ENCODE measurements at regions of chr4 and their contacts with region 1.

Region 1: GRCh38 chr4:7067452-7068278 is at the start of gene GRPEL1:
- DNase-seq: peak; percentile 98 to 100 (median 99)
- H3K4me3 ChIP-seq: peak within 1 kb of the TSS; percentile 64 to 100 (median 96)
- H3K27ac ChIP-seq: peak within 1 kb of the TSS; percentile 3 to 95 (median 87)
- H3K27me3 ChIP-seq: no peaks in the 10 kb centered on the region
- CTCF ChIP-seq: peak in 15 of 56 donors; percentile 4 to 42 (median 25)
- total RNA-seq, gene GRPEL1: 19.1 to 48.6 (median 35.8) TPM

Region 2: GRCh38 chr4:6716018-6716911 is 351.4 kb before region 1 on chr4 and contains the start of gene BLOC1S4:
- intact Hi-C with region 1: loop called in 1 of 2 experiments (anchors 1 kb)
- DNase-seq: peak; percentile 71 to 88 (median 84)
- H3K4me3 ChIP-seq: peak within 1 kb of the TSS; percentile 63 to 96 (median 83)
- H3K27ac ChIP-seq: peak within 1 kb of the TSS; percentile 34 to 99 (median 90)
- H3K27me3 ChIP-seq: no peaks in the 10 kb centered on the region
- CTCF ChIP-seq: peak in 43 of 56 donors; percentile 5 to 59 (median 30)
- total RNA-seq, gene BLOC1S4: 5.0 to 12.2 (median 9.0) TPM

Region 3: GRCh38 chr4:6727081-6727942 is 340.4 kb before region 1 on chr4:
- intact Hi-C with region 1: loop called in 1 of 2 experiments (anchors 2 kb)
- DNase-seq: peak; percentile 53 to 93 (median 90)
- H3K4me3 ChIP-seq: peak overlapping the region in 51 of 59 donors; percentile 2 to 55 (median 30)
- H3K27ac ChIP-seq: peak overlapping the region; percentile 49 to 97 (median 92)
- H3K27me3 ChIP-seq: no peaks in the 10 kb centered on the region
- CTCF ChIP-seq: peak in 20 of 56 donors; percentile 6 to 41 (median 16)

Region 4: DNA sequence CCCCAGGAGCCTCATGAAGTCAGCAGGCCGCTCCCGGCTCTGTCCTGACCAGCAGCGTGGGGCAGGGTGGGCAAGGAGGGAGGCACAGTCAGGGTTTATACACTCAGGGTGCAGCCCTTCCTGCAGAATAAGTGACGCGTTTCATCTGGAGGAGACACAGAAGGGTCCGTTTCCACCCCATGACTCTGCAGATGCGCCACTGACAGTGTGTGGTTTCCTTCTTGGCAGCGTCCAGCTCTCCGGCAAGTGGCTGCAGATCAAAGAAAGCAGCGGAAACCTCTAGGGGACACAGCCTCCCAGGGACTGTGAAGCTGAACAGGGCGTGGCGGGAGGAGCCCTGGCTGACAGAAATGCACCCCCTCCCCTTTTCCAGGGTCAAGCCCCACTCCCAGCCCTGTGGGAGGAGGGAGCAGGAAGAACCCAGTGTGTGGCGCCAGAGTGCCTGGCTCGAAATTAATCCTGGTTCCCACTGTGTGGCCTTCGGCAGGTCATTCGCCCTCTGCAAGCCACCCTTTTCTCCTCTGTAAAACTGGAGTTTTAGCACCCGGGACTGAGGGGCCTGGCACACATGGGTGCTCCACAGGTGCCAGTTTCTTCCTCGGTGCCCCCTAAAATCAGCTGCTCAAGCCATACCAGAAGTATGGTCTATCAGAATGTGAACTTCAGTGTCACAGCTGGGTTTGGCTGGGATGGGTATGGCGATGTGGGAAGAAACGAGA is 175.3 kb before region 1 on chr4:
- intact Hi-C with region 1: loop called in 1 of 2 experiments (anchors 5 kb)
- DNase-seq: peak in 1 of 10 donors; percentile 26
- H3K4me3 ChIP-seq: peak overlapping the region in 19 of 59 donors; percentile 0 to 41 (median 11)
- H3K27ac ChIP-seq: peak overlapping the region in 19 of 59 donors; percentile 3 to 67 (median 36)
- H3K27me3 ChIP-seq: no peaks in the 10 kb centered on the region
- CTCF ChIP-seq: peak in 21 of 56 donors; percentile 12 to 41 (median 22)

Region 5: DNA sequence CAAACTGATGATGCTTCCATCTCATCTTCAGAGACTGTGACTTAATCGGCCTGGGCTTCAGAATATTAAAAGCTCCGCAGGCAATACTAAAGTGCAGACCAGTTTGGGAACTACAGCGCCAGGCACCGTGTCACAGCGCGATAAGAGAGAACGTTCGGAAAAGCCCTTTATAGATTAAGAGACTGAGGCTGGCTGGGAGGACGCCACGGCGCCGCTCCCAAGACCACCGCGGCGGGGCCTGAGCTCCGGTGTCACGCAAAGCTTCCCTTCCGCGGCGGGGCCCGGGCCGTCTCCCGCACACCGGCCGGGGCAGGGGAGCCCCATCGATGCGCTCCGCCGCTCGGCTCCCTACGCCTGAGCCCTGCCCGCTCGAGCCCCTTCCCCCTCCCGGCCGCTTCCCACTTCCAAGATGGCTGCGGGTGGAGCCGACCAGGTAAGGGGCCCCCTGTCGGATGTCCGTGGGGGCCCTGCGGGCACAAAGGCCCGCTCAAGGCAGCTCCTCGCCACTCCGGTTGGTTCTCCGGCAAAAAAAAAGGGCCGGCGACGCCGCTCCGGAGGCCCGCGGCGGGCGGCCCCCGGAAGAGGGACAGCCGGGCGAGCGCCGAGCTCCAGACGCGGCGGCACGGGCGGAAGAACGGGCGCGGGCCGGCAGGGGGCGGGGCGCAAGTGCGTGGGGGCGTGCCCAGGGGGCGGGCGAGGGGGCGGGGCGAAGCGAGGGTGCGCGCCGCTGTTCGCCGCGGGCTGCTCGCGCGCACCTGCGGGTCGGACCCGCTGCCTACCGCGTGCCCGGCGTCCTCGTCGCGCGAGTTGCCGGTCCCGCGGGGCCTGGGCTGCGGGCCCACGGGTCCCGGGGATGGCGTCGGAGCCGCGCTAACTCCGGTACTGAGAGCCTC is 158.3 kb before region 1 on chr4 and contains the start of gene TBC1D14:
- intact Hi-C with region 1: loop called (anchors 2 kb)
- DNase-seq: peak; percentile 79 to 91 (median 85)
- H3K4me3 ChIP-seq: peak within 1 kb of the TSS; percentile 59 to 99 (median 83)
- H3K27ac ChIP-seq: peak within 1 kb of the TSS; percentile 76 to 99 (median 96)
- H3K27me3 ChIP-seq: no peaks in the 10 kb centered on the region
- CTCF ChIP-seq: peak in 47 of 56 donors; percentile 15 to 69 (median 39)
- total RNA-seq, gene TBC1D14: 44.0 to 85.9 (median 62.0) TPM

Region 6: GRCh38 chr4:6986781-6987587 is 80.7 kb before region 1 on chr4:
- intact Hi-C with region 1: loop called (anchors 5 kb)
- DNase-seq: peak; percentile 91 to 98 (median 95)
- H3K4me3 ChIP-seq: peak overlapping the region; percentile 59 to 98 (median 91)
- H3K27ac ChIP-seq: peak overlapping the region; percentile 59 to 99 (median 96)
- H3K27me3 ChIP-seq: no peaks in the 10 kb centered on the region
- CTCF ChIP-seq: peak in 26 of 56 donors; percentile 7 to 56 (median 32)

Region 7: DNA sequence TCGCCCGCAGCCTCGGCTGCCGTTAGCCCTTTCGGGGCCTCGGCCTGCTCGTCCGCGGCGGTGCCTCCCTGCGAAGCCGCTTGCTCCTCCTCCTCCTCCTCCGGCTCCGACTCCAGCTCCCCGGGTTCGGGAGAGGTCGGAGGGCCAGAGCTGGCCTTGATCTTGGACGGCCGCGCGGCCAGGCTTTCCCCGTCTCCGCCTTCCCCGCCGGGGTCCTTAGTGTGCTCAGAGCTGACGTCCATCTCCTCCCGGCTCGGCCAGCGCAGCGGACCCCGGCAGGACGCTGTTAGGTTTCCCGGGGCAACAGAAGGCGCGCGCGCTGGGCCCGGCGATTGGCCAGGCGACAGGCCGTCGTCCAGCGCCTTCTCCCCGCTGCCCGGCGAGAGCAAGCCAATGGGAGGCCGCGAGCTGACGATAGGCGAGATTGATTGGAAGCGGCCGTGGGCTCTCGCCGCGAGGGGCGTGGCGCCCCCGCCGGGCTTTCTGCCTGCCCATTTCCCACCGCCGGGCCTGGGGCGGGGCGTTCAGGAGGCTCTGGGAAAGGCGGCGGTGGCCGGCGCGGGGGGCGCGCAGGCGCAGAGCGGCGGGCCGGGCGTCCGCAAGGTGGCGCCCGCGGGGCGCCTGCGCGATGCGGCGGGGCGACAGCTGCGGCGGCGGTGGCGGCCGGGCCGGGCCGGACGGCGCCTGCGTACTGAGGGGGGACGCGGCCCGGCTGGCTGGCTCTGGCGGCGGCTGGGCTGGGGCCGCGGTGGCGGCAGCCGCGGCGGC is 24.8 kb before region 1 on chr4 and contains the start of gene TADA2B:
- intact Hi-C with region 1: loop called (anchors 1 kb)
- DNase-seq: peak; percentile 91 to 98 (median 97)
- H3K4me3 ChIP-seq: peak within 1 kb of the TSS; percentile 74 to 100 (median 97)
- H3K27ac ChIP-seq: peak within 1 kb of the TSS in 56 of 59 donors; percentile 53 to 95 (median 82)
- H3K27me3 ChIP-seq: no peaks in the 10 kb centered on the region
- CTCF ChIP-seq: peak in 52 of 56 donors; percentile 7 to 73 (median 51)
- total RNA-seq, gene TADA2B: 19.6 to 36.0 (median 26.7) TPM

Region 8: DNA sequence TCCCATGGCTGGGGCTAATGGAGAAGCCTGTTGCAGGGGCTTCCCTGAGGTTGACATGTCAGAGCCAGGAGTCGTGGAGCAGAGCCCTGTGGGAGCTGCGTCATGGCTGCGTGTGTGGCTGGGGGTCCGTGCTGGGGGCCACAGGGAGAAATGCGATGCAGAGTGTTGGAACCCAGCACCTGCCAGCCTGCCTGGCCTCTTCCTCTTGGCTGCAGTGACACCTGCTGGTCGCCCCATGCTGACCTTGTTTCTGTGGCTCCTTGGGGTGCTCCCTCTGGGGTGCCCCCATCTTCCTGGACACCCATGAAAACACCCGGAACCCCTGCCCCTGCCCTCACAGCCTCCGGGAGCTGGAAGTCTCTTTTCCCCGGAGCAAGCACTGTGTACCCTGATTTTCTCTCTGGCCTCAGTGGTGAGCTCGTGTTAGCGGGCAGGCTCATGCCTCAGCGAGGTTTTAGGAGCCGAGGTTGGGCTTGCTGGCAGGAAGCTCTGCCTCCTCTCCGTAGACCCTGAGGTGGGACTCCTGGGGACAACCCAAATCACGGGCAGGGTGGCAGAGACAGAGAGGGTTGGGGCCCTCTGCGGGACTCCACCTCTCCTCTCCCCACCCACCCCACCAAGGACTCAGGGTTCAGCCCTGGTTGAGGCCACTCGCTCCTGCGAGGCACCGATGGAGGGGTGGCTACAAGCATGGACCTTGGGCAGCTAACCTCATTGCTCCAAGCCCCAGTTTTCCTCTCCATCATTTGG is 228.4 kb after region 1 on chr4:
- intact Hi-C with region 1: no loop called
- DNase-seq: peak in 8 of 10 donors; percentile 53 to 79 (median 68)
- H3K4me3 ChIP-seq: peak overlapping the region in 12 of 59 donors; percentile 7 to 53 (median 20)
- H3K27ac ChIP-seq: peak overlapping the region in 52 of 59 donors; percentile 26 to 88 (median 77)
- H3K27me3 ChIP-seq: no peaks in the 10 kb centered on the region
- CTCF ChIP-seq: peak; percentile 14 to 82 (median 67)

Region 9: GRCh38 chr4:7358100-7358735 is 290.6 kb after region 1 on chr4:
- intact Hi-C with region 1: no loop called
- DNase-seq: peak in 7 of 10 donors; percentile 63 to 80 (median 71)
- H3K4me3 ChIP-seq: no peak overlapping the region
- H3K27ac ChIP-seq: peak overlapping the region in 50 of 59 donors; percentile 2 to 99 (median 53)
- H3K27me3 ChIP-seq: no peaks in the 10 kb centered on the region
- CTCF ChIP-seq: no peak